K562 (cell line): ENCODE measurements at regions of chr15 and their contacts with region 1.

Region 1: DNA sequence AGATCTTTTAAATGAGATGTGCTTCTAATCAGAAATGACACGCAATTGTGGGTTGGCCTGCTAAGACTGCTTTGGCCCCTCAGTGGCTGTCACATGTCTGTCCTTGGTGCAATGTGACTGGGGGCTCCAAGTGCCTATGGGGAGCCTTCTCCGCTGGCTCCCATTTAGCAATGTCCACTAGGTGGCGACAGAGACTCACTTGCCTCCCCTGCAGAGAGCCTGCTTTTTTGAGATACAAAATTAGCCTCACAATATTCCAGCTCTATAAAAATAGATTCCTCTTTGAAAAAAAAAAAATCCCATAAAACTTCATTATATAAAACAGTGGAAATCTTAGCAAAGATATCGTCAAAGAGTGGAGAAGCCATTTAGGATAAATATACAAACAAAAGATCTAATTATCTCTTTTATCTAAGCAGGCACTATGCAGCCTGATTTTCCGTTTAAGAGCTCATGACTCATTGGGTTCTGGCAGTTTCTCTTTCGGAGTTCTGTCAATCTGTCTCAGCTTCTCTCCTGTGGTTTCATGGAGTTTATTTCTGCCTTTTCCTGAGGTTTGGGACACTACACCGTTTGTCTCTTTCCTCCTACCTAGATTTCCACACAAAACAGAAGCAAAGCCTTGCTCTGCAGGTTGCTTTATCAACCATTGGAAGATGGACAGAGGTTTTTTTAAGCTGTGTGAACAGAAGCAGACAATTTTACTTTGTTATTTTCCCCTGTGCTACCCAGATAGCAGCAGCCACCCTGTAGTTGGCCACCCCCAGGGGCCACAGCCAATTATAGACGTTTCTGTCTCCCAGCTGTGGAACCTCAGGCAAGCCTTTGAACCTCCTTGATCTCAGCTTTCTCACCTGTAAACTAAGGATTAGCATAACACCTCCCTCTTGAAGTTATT is 68.4 kb upstream of the TNFAIP8L3 start:
- DNase-seq: peak; percentile 78 to 89 (median 86)
- ATAC-seq: peak; percentile 99
- H3K4me3 ChIP-seq: no peak overlapping the region
- H3K27ac ChIP-seq: no peak overlapping the region
- H3K4me1 ChIP-seq: peaks cover 0 to 7% of the 10 kb centered on the region in 2 experiments; a peak in 1 of 5 replicates
- H3K27me3 ChIP-seq: peaks cover 3 to 6% of the 10 kb centered on the region in 2 experiments; a peak in 2 of 5 replicates
- CTCF ChIP-seq: peak; percentile 87 to 95 (median 88)
- EP300 ChIP-seq: no peak
- POLR2A ChIP-seq: no peak
- RAD21 ChIP-seq: peak; percentile 89 to 90

Region 2: DNA sequence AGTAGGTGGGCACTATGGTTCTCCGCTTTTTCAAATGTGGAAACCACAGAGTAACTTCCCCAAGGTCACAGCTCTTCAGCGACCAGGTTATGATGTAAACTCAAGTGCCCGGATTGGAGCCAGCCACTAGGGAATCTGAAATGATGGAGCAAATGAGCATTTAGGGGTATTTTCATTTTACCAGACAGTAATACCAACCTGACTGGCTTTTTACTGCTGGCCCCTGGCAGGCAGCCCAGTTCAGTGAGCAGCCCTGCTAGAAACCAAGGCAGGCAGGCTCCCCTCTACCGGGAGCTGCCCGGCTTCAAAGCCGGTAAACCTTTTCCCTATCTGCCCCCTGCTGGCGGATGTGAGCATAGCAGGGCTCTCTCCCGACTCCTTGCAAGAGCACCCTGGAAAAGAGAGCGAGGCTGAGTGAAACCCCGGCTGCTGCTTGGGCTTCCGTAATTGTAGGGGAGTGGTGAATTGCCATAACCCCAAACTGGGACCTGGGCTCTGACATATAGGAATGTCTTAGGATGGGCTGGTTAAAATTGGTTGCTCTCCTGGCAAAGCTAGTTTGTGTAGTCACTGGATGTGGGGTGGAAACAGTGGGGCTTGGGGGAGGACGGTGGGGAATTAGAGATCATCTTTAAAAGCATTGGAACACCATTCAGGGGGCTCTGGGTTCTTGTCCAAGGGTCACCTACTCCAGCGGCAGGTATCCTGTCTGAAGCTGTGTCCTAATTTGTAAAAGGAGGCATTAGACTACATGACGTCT is 29.6 kb after region 1 on chr15:
- CTCF ChIA-PET with region 1: interaction called, 6 read pairs
- POLR2A ChIA-PET with region 1: interaction called, 8 read pairs
- in situ Hi-C with region 1: loop called (anchors 5 kb)
- intact Hi-C with region 1: loop called (anchors 1 kb)
- DNase-seq: peak; percentile 76 to 86 (median 78)
- ATAC-seq: peak; percentile 98
- H3K4me3 ChIP-seq: no peak overlapping the region
- H3K27ac ChIP-seq: no peak overlapping the region
- H3K4me1 ChIP-seq: no peaks in the 10 kb centered on the region
- H3K27me3 ChIP-seq: peaks cover 18 to 33% of the 10 kb centered on the region in 2 experiments; a peak in 4 of 5 replicates
- CTCF ChIP-seq: peak; percentile 88 to 92 (median 92)
- EP300 ChIP-seq: no peak
- POLR2A ChIP-seq: no peak
- RAD21 ChIP-seq: peak; percentile 75 to 90

Region 3: DNA sequence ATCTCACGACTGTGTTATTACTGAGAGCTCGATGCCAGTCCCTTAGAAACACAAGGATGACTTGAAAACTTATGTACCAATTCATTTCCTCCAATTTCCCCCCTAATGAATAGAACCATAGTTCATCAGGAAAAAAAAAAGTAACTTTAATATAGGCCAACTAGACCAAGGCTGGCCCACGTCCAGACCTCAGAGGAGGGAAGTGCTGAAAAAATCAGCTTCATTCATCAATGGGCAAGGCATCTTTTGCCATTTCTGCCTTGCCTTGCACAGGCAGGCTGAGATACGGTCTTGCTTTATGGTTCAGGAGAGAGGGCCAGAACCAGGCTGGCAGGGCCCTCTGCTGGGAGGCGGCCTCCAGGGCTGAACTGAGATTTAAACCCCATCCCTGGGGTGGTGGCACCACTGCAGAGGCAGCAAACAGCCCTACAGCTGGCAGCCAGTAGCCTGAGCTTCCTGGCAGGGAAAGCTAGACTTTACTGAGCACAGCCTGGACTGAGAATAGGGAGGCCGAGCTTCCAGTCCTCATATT is 35.7 kb after region 1 on chr15:
- CTCF ChIA-PET with region 1: no interaction called
- POLR2A ChIA-PET with region 1: interaction called, 3 read pairs
- in situ Hi-C with region 1: loop called (anchors 5 kb)
- intact Hi-C with region 1: no loop called
- DNase-seq: no peak
- ATAC-seq: no peak
- H3K4me3 ChIP-seq: no peak overlapping the region
- H3K27ac ChIP-seq: no peak overlapping the region
- H3K4me1 ChIP-seq: no peaks in the 10 kb centered on the region
- H3K27me3 ChIP-seq: peaks cover 31 to 43% of the 10 kb centered on the region in 2 experiments
- CTCF ChIP-seq: no peak
- EP300 ChIP-seq: no peak
- POLR2A ChIP-seq: no peak
- RAD21 ChIP-seq: no peak

Region 4: GRCh38 chr15:51227940-51228783 is 65.0 kb after region 1 on chr15:
- CTCF ChIA-PET with region 1: no interaction called
- POLR2A ChIA-PET with region 1: no interaction called
- in situ Hi-C with region 1: no loop called
- intact Hi-C with region 1: loop called (anchors 10 kb)
- DNase-seq: peak; percentile 74 to 88 (median 82)
- ATAC-seq: peak; percentile 95
- H3K4me3 ChIP-seq: no peak overlapping the region
- H3K27ac ChIP-seq: peak overlapping the region; percentile 82
- H3K4me1 ChIP-seq: peaks cover 11 to 31% of the 10 kb centered on the region in 2 experiments
- H3K27me3 ChIP-seq: peaks cover 0 to 3% of the 10 kb centered on the region in 2 experiments; a peak in 3 of 5 replicates
- CTCF ChIP-seq: no peak
- EP300 ChIP-seq: peak; percentile 67; the same call in 1 of the 2 replicates
- POLR2A ChIP-seq: no peak
- RAD21 ChIP-seq: no peak

Region 5: GRCh38 chr15:51281368-51281967 is 118.4 kb after region 1 on chr15:
- CTCF ChIA-PET with region 1: interaction called, 3 read pairs
- POLR2A ChIA-PET with region 1: no interaction called
- in situ Hi-C with region 1: no loop called
- intact Hi-C with region 1: loop called (anchors 10 kb)
- DNase-seq: peak; percentile 29 to 67 (median 48)
- ATAC-seq: peak; percentile 98
- H3K4me3 ChIP-seq: no peak overlapping the region
- H3K27ac ChIP-seq: no peak overlapping the region
- H3K4me1 ChIP-seq: no peaks in the 10 kb centered on the region
- H3K27me3 ChIP-seq: peaks cover 13 to 31% of the 10 kb centered on the region in 2 experiments
- CTCF ChIP-seq: peak; percentile 69 to 76 (median 73)
- EP300 ChIP-seq: no peak
- POLR2A ChIP-seq: no peak
- RAD21 ChIP-seq: peak; percentile 70 to 78

Region 6: GRCh38 chr15:51401872-51402517 is 238.9 kb after region 1 on chr15:
- CTCF ChIA-PET with region 1: interaction called, 7 read pairs
- POLR2A ChIA-PET with region 1: no interaction called
- in situ Hi-C with region 1: no loop called
- intact Hi-C with region 1: loop called (anchors 2 kb)
- DNase-seq: peak; percentile 54 to 68 (median 60)
- ATAC-seq: peak; percentile 84
- H3K4me3 ChIP-seq: no peak overlapping the region
- H3K27ac ChIP-seq: no peak overlapping the region
- H3K4me1 ChIP-seq: no peaks in the 10 kb centered on the region
- H3K27me3 ChIP-seq: peaks cover 39 to 40% of the 10 kb centered on the region in 2 experiments
- CTCF ChIP-seq: peak; percentile 73 to 87 (median 76)
- EP300 ChIP-seq: no peak
- POLR2A ChIP-seq: no peak
- RAD21 ChIP-seq: peak; percentile 47 to 70